Colonic mucosa (tissue), 4 donors: ENCODE measurements at regions of chr5 and their contacts with region 1.

Region 1: DNA sequence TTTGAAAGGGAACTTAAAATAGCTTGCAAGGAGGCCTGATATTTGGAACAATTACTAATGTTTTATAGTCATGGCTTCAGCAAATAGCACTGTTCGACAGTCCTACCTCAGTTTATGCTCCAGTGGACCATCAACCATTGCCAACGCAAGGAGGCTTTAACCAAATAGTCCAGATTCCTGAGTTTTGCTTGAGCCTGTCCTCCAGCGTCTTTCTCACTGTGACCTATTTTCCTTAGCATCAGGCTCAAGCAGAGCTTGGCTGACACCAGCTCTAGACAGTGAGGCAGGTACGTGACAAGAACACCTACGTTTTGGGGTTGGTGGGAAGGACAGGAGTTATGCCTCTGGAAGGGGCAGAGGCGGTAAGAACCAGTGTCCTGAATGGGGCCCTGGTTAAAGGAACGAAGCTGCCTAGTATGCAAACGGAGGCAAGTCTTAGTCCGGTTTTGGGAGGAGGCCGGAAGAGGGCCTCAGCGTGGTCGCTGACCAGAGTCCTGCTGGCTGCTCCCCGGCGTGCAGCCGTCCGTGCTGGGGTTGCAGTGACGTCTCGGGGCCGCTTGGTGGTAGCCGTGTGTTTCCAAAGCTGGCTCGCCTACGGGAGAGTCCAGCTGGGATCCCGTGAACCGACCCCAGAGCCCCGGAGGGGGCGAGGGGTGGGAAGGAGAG is 998 bp upstream of the FGF18 start:
- DNase-seq: peak; percentile 72
- H3K4me3 ChIP-seq: peak overlapping the region; percentile 30
- H3K27ac ChIP-seq: no peak overlapping the region
- H3K4me1 ChIP-seq: peaks cover 14% of the 10 kb centered on the region
- H3K27me3 ChIP-seq: peaks cover 15% of the 10 kb centered on the region
- CTCF ChIP-seq: peak; percentile 94

Region 2: DNA sequence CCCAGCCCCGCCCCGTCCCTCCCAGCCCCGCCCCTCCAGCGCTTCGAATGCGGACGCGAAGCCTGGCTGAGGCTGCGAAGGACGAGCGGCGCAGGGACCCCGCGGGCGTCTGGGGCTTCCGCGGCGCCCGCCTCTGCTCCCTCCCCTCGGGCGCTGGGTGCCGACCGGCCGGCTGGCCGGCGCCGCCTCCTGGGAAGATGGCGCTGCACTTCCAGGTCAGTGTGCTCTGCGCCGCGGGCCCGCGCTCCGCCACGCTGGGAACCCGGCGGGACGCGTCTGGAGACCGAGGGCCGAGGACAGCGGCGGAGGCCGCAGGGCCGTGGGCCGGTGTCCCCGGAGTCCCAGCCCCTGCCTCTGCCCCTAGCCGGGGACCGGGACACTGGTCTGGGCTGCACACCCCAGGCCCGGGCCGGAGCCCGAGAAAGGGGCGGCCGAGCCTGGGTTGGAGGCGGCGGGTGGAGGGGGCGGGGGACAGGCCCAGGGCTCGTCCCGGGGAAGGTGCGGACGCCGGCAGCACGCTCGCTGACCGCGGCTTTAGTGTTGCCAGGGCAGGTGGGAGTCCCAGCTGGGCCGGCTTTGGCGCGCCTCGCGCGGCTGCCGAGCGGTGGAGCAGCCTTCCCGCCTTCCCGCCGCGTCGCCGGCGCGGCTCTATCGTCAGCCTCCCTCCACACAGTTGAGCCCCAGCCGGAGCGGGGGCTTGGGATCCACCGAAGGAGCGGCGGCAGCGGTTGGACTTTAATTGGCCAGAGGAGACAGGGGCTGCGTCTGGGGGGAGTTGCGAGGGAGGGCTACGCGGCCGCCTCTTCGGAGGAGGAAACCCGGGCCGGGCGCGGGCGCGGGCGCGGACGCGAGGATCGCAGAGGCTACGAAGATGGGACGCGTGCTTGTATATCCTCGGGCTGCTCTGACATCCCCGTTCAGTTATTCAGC is 556.3 kb before region 1 on chr5 and contains the start of gene RANBP17:
- intact Hi-C with region 1: no loop called
- DNase-seq: peak; percentile 59
- H3K4me3 ChIP-seq: peak within 1 kb of the TSS; percentile 74
- H3K27ac ChIP-seq: no peak within 1 kb of the TSS
- H3K4me1 ChIP-seq: no peaks in the 10 kb centered on the region
- H3K27me3 ChIP-seq: no peaks in the 10 kb centered on the region
- CTCF ChIP-seq: no peak
- total RNA-seq, gene RANBP17: 7.9 to 9.4 TPM

Region 3: DNA sequence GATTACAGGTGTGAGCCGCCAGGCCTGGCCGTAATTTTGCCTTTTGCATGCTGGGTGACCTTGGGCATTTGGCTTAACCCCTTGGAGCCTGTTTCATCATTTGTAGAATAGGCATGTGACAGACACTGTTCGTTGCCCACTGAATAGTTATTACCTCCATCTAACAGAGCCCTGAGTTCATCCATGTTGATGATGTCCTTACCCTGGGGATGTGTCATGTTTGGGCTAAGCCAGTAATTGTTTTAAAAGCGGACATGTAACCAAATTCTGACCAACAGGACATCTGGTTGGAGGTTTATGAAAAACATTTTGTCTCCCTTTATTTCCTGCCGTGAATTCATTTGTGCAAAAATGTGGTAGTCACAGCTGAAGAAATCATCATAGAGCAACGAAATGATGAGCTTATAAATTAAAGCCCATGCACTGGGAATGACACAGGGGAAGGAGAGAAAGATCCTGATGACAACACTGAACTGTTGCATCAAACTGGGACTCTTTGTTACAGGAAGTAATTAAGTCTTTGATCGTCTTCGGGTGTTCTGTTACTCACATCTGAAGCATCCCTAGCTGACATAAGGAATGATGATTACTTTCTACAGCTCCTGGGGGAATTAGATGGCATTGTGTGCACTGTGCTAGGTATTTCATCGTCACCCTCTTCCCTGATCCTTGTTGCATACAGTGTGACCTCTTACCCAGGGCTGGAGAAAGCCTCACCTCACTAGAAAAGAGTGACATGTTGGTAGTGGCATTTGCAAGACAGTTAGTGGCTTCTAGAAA is 118.8 kb after region 1 on chr5:
- intact Hi-C with region 1: no loop called
- DNase-seq: no peak
- H3K4me3 ChIP-seq: no peak overlapping the region
- H3K27ac ChIP-seq: no peak overlapping the region
- H3K4me1 ChIP-seq: no peaks in the 10 kb centered on the region
- H3K27me3 ChIP-seq: no peaks in the 10 kb centered on the region
- CTCF ChIP-seq: no peak

Region 4: GRCh38 chr5:171907725-171908343 is 489.4 kb after region 1 on chr5:
- intact Hi-C with region 1: loop called (anchors 5 kb)
- DNase-seq: peak; percentile 47
- H3K4me3 ChIP-seq: no peak overlapping the region
- H3K27ac ChIP-seq: no peak overlapping the region
- H3K4me1 ChIP-seq: no peaks in the 10 kb centered on the region
- H3K27me3 ChIP-seq: no peaks in the 10 kb centered on the region
- CTCF ChIP-seq: peak; percentile 78

Region 5: DNA sequence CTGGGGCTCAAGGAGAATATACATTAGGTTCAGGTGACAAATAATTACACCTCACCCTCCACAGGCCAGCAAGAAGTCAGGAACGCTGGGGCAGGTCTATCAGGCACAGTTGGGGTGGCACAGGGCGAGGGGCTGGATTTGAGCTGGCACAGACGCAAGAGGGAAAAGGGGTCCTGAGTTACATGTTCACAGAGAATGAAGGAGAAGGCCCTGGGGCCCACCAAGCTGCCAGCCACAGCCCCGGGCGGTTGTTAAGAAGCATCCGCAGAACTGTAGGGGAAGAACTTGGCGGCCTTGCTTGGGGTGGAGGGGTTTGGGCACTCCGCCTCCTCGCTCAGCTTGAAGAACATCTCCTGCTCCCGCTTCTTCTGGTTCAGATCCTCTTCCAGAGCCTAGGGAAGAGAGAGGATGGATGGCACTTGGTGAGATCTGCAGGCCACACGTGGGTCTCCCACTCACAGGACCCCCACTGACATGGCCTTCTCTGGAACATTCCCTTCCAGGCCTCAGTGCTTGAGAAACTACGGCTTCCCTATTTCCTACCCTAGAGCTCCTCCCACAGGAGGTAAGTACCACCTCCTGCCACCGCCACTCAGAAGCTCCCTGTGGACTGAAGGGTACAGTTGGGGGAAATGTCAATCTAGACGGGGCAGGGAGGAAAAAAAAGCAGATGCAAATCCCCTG is 626.3 kb after region 1 on chr5:
- intact Hi-C with region 1: loop called (anchors 5 kb)
- DNase-seq: no peak
- H3K4me3 ChIP-seq: no peak overlapping the region
- H3K27ac ChIP-seq: no peak overlapping the region
- H3K4me1 ChIP-seq: no peaks in the 10 kb centered on the region
- H3K27me3 ChIP-seq: no peaks in the 10 kb centered on the region
- CTCF ChIP-seq: no peak